HEK293T (cell line): ENCODE measurements at regions of chr1 and their contacts with region 1.

Region 1: GRCh38 chr1:109295712-109296415 is 10.9 kb downstream of the MYBPHL start:
- DNase-seq: no peak

Region 2: DNA sequence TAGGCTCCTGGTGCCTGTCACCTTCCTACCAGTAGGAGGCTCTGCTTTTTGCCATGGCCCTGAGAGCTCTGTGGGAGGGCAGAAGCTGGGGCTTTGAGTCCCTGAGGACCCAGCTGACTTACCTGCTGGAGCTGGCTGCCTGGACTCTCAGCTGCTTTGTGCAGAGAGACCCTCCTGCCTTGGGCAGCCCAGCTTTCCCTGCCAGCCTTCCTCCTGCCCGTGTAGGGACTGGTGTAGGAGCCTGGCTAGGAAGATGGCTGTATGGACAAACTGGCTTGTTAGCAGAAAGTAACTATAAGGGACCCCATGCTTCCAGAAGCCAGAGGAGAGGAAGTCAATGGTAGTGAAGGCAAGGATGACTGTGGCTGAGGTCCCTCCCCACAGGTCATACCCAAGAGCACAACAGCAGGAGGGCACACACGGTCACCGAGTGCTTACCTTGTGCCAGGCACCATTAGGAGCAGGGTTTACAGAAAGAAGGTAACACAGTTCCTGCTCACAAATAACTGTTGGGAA is 56.2 kb before region 1 on chr1:
- CTCF ChIA-PET with region 1: no interaction called
- POLR2A ChIA-PET with region 1: no interaction called
- DNase-seq: peak; percentile 78

Region 3: DNA sequence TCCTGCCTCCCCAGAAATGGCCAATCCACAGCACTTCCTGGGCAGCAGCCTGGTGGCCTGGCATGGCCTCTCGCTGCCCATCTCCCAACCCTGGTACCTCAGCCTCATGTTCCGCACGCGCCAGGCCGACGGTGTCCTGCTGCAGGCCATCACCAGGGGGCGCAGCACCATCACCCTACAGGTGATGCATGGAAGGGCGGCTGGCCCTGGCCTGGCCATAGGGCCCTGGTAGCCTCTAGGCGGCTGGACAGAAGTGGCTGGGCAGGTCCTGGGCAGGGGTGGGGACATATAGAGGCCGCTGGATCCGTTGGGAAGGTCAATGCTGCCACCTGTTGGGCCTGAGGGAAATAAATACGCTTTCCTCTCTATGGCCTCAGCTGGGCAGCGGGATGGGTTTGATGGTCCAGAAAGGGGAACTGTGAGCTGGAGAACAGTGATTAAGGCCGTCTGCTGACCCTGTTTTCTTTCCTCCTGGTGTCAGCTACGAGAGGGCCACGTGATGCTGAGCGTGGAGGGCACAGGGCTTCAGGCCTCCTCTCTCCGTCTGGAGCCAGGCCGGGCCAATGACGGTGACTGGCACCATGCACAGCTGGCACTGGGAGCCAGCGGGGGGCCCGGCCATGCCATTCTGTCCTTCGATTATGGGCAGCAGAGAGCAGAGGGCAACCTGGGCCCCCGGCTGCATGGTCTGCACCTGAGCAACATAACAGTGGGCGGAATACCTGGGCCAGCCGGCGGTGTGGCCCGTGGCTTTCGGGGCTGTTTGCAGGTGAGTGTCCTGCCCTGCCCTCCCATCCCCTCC is 32.1 kb before region 1 on chr1:
- CTCF ChIA-PET with region 1: no interaction called
- POLR2A ChIA-PET with region 1: no interaction called
- DNase-seq: peak; percentile 88

Region 4: DNA sequence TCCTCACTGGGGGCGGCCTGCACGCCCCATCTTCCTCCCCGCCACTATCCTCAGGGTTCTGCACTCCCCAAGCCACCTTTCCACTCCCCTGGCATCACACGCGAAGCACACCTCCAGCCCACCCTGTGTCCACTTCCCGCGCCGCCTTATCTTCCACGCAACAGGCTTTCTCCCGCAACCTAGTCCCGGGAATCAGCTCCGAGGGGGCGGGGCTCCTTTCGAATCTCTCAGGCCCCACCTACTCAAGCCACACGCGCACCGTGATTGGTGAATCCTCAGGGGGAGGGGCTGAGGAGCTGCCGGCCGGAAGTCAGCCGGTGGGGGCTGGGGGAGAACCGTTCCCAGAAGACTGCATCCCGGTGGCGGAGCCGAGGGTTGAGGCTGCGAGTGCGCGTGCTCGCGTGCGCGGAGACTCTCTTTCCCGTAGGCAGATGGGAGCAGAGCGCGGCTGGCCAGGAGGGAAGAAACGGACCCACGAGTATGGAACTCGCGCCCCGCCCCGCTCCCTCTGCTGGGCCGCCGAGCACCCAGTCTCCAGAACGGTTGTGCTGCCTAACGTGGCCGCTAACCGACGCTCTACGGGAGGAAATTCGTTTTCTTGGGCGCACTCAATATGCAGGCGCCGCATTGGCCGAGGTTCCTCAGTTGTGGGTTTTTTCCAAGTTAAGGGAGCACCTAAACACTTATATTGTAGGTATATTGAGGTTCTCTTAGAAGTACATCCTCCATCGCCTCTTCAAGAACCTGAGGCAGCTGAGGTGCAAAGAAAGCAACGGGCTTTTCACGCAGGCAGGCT is 12.7 kb before region 1 on chr1 and contains the start of gene PSRC1:
- CTCF ChIA-PET with region 1: no interaction called
- POLR2A ChIA-PET with region 1: interaction called, 13 read pairs
- DNase-seq: peak; percentile 99

Region 5: GRCh38 chr1:109391626-109392025 is 95.8 kb after region 1 on chr1:
- CTCF ChIA-PET with region 1: no interaction called
- POLR2A ChIA-PET with region 1: no interaction called
- DNase-seq: no peak